ENCODE measurements at regions of chr19 and their contacts with region 1.

Region 1: DNA sequence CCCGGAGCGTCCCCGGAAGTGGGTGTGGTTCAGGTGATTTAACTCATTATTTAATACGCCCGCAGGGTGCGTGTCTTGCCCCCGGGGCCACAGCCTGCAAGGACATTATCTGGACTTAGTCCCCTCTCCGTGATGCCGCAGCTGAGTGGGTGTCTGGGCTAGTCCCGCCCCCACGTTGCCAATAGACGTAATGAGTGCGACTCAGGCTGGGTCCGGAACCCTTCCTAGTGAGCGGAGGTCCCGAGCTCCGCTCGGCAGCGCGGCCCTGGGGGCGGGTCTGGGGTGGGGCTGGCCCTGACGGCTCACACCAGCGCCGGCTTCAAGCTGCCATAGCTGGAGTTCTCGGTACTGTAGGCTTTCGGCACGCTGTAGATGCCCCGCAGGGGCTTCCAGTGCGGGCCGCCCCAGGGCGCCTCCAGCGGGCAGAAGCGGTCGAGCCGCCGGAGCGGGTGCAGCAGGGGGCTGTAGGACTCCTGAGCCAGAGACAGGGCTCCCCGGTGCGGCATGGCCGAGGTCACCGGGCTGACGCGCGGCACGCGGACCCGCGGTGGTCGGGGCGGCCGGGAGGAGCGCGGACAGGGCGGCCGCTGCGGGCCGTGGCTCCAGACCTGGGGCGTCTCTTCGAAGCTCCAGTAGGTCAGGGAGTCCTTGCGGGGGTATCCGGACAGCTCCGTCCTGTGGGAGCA is 918 bp upstream of the LHB start:
- DNase-seq: peak; percentile 73
- ATAC-seq: peak; percentile 77
- H3K4me3 Mint-ChIP-seq: peak overlapping the region; percentile 55
- H3K27ac Mint-ChIP-seq: no peak overlapping the region
- H3K4me1 Mint-ChIP-seq: peaks cover 30% of the 10 kb centered on the region
- H3K27me3 Mint-ChIP-seq: peaks cover 9% of the 10 kb centered on the region
- CTCF ChIP-seq: peak; percentile 84

Region 2: DNA sequence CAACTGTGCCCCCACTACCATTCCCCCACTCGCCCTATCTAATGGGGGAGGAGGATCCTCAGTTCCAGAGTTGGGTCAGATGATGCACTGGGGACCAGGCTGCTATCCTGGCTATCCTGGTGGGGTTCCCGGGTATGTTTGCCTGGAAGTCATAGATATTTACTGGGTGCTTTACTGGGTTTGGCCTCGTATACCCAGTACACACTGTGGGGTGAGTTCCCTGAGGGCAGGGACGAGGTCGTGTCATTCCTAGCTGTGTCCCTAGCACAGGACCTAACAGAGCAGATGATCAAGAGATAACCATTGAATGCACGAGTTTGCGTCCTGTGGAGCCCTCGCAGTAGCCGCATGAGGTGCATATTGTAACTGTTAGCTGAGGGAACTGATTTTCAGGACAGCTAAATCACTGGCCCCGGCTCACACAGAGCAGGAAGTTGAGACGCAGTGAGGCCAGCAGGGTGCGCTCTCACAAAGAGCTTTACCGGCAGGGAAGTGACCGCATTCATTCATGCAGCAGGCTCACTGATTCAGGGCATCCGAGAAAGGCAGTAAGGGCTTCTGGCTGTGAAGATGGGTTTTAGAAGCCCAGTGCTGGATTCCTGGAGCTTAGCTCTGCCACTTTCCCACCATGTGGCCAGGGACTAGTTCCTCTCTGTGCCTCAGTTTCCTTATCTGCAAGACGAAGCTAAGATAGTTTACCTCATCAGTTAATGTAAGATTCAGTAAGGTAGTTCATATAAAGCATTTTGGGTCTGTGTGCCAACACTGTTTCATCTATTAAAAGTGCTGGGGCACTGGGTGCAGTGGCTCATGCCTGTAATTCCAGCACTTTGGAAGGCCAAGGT is 18.1 kb before region 1 on chr19:
- CTCF ChIA-PET with region 1: interaction called, 17 read pairs
- POLR2A ChIA-PET with region 1: interaction called, 4 read pairs
- intact Hi-C with region 1: no loop called
- DNase-seq: peak; percentile 77
- ATAC-seq: peak; percentile 87
- H3K4me3 Mint-ChIP-seq: no peak overlapping the region
- H3K27ac Mint-ChIP-seq: no peak overlapping the region
- H3K4me1 Mint-ChIP-seq: peaks cover 25% of the 10 kb centered on the region
- H3K27me3 Mint-ChIP-seq: no peaks in the 10 kb centered on the region
- CTCF ChIP-seq: peak; percentile 57

Region 3: GRCh38 chr19:49042177-49042576 is 24.4 kb after region 1 on chr19:
- CTCF ChIA-PET with region 1: no interaction called
- POLR2A ChIA-PET with region 1: no interaction called
- intact Hi-C with region 1: no loop called
- DNase-seq: no peak
- ATAC-seq: no peak
- H3K4me3 Mint-ChIP-seq: no peak overlapping the region
- H3K27ac Mint-ChIP-seq: no peak overlapping the region
- H3K4me1 Mint-ChIP-seq: no peaks in the 10 kb centered on the region
- H3K27me3 Mint-ChIP-seq: no peaks in the 10 kb centered on the region
- CTCF ChIP-seq: no peak